H1 (cell line): ENCODE measurements at regions of chr6 and their contacts with region 1.

Region 1: DNA sequence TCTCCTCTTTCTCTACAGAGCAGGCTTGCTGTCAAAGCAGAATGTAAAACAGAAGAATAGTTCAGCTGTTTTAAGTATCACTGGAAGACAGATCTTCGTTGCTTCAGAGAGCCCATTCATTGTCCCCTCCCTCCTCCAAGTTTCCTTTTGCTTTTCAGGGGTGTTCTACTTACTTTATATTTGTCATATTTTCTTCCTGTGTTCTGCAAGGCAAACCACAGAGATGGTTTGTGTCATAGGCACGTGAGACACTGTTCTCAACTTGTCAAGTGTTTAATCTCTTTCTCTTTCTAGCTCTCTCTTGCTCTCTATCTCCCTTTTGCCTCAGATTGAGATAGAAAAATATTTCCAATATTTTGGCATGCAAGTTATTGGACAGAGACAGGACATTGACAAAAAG is 228.9 kb upstream of the DEFB112 start:
- DNase-seq: no peak
- H3K4me3 ChIP-seq: no peak overlapping the region
- H3K27ac ChIP-seq: no peak overlapping the region
- H3K4me1 ChIP-seq: no peaks in the 10 kb centered on the region; a peak in 1 of 7 replicates
- H3K27me3 ChIP-seq: no peaks in the 10 kb centered on the region
- CTCF ChIP-seq: no peak
- EP300 ChIP-seq: no peak
- POLR2A ChIP-seq: no peak
- RAD21 ChIP-seq: no peak

Region 2: GRCh38 chr6:49939993-49940498 is 338.6 kb before region 1 on chr6:
- CTCF ChIA-PET with region 1: no interaction called
- POLR2A ChIA-PET with region 1: no interaction called
- DNase-seq: no peak
- H3K4me3 ChIP-seq: no peak overlapping the region
- H3K27ac ChIP-seq: no peak overlapping the region
- H3K4me1 ChIP-seq: no peaks in the 10 kb centered on the region
- H3K27me3 ChIP-seq: no peaks in the 10 kb centered on the region
- CTCF ChIP-seq: no peak
- EP300 ChIP-seq: no peak
- POLR2A ChIP-seq: no peak
- RAD21 ChIP-seq: no peak

Region 3: GRCh38 chr6:50236164-50236563 is 42.5 kb before region 1 on chr6:
- CTCF ChIA-PET with region 1: no interaction called
- POLR2A ChIA-PET with region 1: no interaction called
- DNase-seq: no peak
- H3K4me3 ChIP-seq: no peak overlapping the region
- H3K27ac ChIP-seq: no peak overlapping the region
- H3K4me1 ChIP-seq: no peaks in the 10 kb centered on the region
- H3K27me3 ChIP-seq: no peaks in the 10 kb centered on the region
- CTCF ChIP-seq: no peak
- EP300 ChIP-seq: no peak
- POLR2A ChIP-seq: no peak
- RAD21 ChIP-seq: no peak

Region 4: GRCh38 chr6:50264995-50265571 is 13.6 kb before region 1 on chr6:
- CTCF ChIA-PET with region 1: interaction called, 13 read pairs
- POLR2A ChIA-PET with region 1: interaction called, 3 read pairs
- DNase-seq: no peak
- H3K4me3 ChIP-seq: no peak overlapping the region
- H3K27ac ChIP-seq: no peak overlapping the region
- H3K4me1 ChIP-seq: no peaks in the 10 kb centered on the region
- H3K27me3 ChIP-seq: no peaks in the 10 kb centered on the region
- CTCF ChIP-seq: peak in 2 of 3 experiments; percentile 63 to 67; a peak in 3 of 4 replicates
- EP300 ChIP-seq: no peak
- POLR2A ChIP-seq: no peak
- RAD21 ChIP-seq: peak; percentile 68

Region 5: DNA sequence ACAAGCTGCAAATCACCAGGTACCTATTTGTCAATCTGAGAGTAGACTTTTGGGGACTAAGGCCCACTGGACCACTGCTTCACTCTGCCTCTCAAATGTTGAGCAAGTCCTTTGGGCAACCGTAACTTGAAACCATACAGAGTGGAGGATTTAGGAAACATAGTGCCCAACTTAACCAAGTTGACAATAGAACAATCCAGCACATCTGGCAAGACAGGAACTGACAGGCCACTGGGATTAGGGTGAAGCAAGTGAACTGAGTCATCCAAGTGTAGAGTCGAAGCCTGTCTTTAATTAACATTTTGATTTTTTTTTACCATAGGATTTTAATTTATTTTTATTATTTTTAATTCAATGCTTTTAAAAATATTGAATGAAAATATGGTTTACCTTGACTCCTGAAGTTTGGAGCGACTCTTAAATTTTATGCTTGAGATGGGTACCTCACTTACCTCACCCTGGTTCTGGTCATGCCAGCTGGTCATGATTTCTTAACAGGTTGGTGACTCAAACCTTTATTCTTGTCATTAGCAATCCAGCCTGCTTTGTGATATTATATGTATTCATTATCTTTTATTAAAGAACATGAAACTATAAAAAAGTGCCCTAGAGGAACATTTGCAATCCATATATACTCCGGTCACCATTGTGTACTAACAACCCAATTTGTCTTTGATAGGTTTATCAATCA is 83.1 kb after region 1 on chr6:
- CTCF ChIA-PET with region 1: no interaction called
- POLR2A ChIA-PET with region 1: no interaction called
- DNase-seq: no peak
- H3K4me3 ChIP-seq: no peak overlapping the region
- H3K27ac ChIP-seq: no peak overlapping the region
- H3K4me1 ChIP-seq: no peaks in the 10 kb centered on the region
- H3K27me3 ChIP-seq: no peaks in the 10 kb centered on the region
- CTCF ChIP-seq: no peak
- EP300 ChIP-seq: no peak
- POLR2A ChIP-seq: no peak
- RAD21 ChIP-seq: no peak

Region 6: DNA sequence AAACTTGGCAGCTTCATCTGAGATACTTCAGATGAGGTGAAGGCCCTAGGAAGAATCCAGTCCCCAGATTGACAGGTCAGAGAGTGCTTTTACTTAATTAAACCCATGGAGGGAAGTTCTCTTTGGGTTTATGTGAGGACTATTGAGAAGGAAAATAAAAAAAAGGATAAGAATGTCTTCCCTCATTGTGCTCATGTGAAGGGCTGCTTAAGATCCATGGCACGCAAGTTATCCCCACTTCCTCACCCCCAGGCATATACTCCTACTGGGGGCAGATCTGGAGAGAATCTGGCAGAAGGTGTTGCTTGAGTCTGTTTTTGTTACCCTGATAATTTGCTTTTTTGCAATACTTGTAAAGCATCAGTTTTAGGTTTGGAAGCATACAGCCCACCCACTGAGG is 111.8 kb after region 1 on chr6:
- CTCF ChIA-PET with region 1: no interaction called
- POLR2A ChIA-PET with region 1: no interaction called
- DNase-seq: no peak
- H3K4me3 ChIP-seq: no peak overlapping the region
- H3K27ac ChIP-seq: no peak overlapping the region
- H3K4me1 ChIP-seq: no peaks in the 10 kb centered on the region
- H3K27me3 ChIP-seq: no peaks in the 10 kb centered on the region
- CTCF ChIP-seq: no peak
- EP300 ChIP-seq: no peak
- POLR2A ChIP-seq: no peak
- RAD21 ChIP-seq: no peak